Uterus (tissue), 4 donors: ENCODE measurements at regions of chr9 and their contacts with region 1.

Region 1: GRCh38 chr9:38127271-38127882 is 58.4 kb upstream of the SHB start:
- DNase-seq: no peak
- H3K4me3 ChIP-seq: no peak overlapping the region
- H3K27ac ChIP-seq: no peak overlapping the region
- H3K4me1 ChIP-seq: no peaks in the 10 kb centered on the region
- H3K27me3 ChIP-seq: no peaks in the 10 kb centered on the region
- CTCF ChIP-seq: no peak
- POLR2A ChIP-seq: no peak

Region 2: GRCh38 chr9:38183994-38184568 is 56.7 kb after region 1 on chr9:
- intact Hi-C with region 1: loop called (anchors 10 kb)
- DNase-seq: no peak
- H3K4me3 ChIP-seq: no peak overlapping the region
- H3K27ac ChIP-seq: no peak overlapping the region
- H3K4me1 ChIP-seq: no peaks in the 10 kb centered on the region
- H3K27me3 ChIP-seq: no peaks in the 10 kb centered on the region
- CTCF ChIP-seq: no peak
- POLR2A ChIP-seq: no peak